MCF 10A (cell line): ENCODE measurements at regions of chr12 and their contacts with region 1.

Region 1: GRCh38 chr12:6563448-6564050 is 4.5 kb downstream of the NOP2 start:
- DNase-seq: peak; percentile 61
- H3K4me3 Mint-ChIP-seq: no peak overlapping the region
- H3K27ac Mint-ChIP-seq: no peak overlapping the region
- H3K4me1 Mint-ChIP-seq: peaks cover 7% of the 10 kb centered on the region
- H3K27me3 Mint-ChIP-seq: no peaks in the 10 kb centered on the region
- CTCF ChIP-seq: peak; percentile 64

Region 2: DNA sequence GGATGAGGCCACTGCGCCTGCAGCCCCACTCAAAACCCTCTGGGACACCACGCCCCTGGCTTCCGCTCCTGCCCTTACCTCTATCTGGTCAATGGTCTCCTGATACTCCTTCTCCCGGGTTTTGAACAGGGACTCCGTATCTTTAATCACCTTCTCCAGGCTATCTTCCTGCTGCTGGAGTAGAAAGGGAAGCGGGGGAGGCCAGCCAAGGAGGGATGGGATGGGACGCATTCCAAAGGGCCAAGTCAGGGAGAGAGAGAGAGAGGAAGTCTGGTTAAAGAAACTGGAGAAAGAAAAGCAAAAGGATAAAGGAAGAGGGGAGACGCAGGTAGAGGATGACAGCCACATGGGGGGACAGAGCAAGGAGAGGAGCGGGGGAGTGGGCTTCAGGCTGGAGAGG is 15.6 kb before region 1 on chr12:
- CTCF ChIA-PET with region 1: interaction called, 33 read pairs
- POLR2A ChIA-PET with region 1: interaction called, 6 read pairs
- intact Hi-C with region 1: no loop called
- DNase-seq: peak; percentile 67
- H3K4me3 Mint-ChIP-seq: no peak overlapping the region
- H3K27ac Mint-ChIP-seq: no peak overlapping the region
- H3K4me1 Mint-ChIP-seq: peaks cover 29% of the 10 kb centered on the region
- H3K27me3 Mint-ChIP-seq: no peaks in the 10 kb centered on the region
- CTCF ChIP-seq: no peak

Region 3: GRCh38 chr12:6697584-6698351 is 134.2 kb after region 1 on chr12:
- CTCF ChIA-PET with region 1: no interaction called
- POLR2A ChIA-PET with region 1: no interaction called
- intact Hi-C with region 1: loop called (anchors 5 kb)
- DNase-seq: peak; percentile 73
- H3K4me3 Mint-ChIP-seq: no peak overlapping the region
- H3K27ac Mint-ChIP-seq: no peak overlapping the region
- H3K4me1 Mint-ChIP-seq: peaks cover 8% of the 10 kb centered on the region
- H3K27me3 Mint-ChIP-seq: peaks cover 60% of the 10 kb centered on the region
- CTCF ChIP-seq: peak; percentile 66